Dendritic cell treated with granulocyte-macrophage colony-stimulating factor and Interleukin-4, amounts not matched to agents 40 ng/mL and 50 ng/mL, for 4 days (primary cell): ENCODE measurements at regions of chr15 and their contacts with region 1.

Region 1: DNA sequence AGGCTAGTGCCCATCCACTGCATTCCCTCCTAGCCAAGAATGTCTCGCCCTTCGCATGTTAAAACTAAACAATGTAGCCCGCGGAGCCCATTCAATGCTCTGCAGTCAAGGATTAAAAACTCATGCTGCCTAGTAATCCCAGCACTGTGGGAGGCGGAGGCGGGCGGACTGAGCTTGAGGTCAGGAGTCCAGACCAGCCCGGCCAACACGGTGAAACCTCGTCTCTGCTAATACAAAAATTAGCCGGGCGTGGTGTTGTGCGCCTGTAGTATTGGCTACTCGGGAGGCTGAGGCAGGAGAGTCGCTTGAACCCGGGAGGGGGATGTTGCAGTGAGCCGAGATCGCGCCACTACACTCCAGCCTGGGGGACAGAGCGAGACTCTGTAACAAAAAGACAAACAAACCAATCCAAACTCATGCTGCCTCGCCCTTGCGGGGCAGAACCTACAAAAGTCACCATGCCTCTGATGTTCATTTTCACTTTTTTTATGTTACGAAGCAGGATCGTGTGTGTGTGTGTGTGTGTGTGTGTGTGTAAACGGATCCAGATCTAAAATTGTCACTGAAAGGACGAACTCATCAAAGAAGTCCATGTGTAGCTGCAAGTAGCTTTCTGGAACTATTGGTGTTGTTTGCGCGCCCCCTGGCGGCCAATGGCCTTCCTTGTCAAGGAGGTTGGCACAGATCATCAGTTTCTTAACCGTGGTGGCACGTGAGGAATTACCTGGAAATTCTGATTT is 54.8 kb upstream of the SPESP1 start:
- H3K4me3 Mint-ChIP-seq: peak overlapping the region; percentile 23
- H3K27ac Mint-ChIP-seq: no peak overlapping the region
- H3K4me1 Mint-ChIP-seq: no peaks in the 10 kb centered on the region
- H3K27me3 Mint-ChIP-seq: peaks cover 17% of the 10 kb centered on the region

Region 2: GRCh38 chr15:67542420-67543347 is 1332.9 kb before region 1 on chr15 and contains the start of gene MAP2K5:
- intact Hi-C with region 1: no loop called
- H3K4me3 Mint-ChIP-seq: peak within 1 kb of the TSS; percentile 93
- H3K27ac Mint-ChIP-seq: peak within 1 kb of the TSS; percentile 93
- H3K4me1 Mint-ChIP-seq: peaks cover 25% of the 10 kb centered on the region
- H3K27me3 Mint-ChIP-seq: peaks cover 2% of the 10 kb centered on the region

Region 3: GRCh38 chr15:68553994-68554720 is 321.4 kb before region 1 on chr15:
- intact Hi-C with region 1: loop called (anchors 1 kb)
- H3K4me3 Mint-ChIP-seq: no peak overlapping the region
- H3K27ac Mint-ChIP-seq: no peak overlapping the region
- H3K4me1 Mint-ChIP-seq: peaks cover 8% of the 10 kb centered on the region
- H3K27me3 Mint-ChIP-seq: peaks cover 41% of the 10 kb centered on the region

Region 4: GRCh38 chr15:68559345-68560310 is 315.9 kb before region 1 on chr15:
- intact Hi-C with region 1: loop called (anchors 1 kb)
- H3K4me3 Mint-ChIP-seq: peak overlapping the region; percentile 76
- H3K27ac Mint-ChIP-seq: peak overlapping the region; percentile 13
- H3K4me1 Mint-ChIP-seq: peaks cover 17% of the 10 kb centered on the region
- H3K27me3 Mint-ChIP-seq: peaks cover 57% of the 10 kb centered on the region

Region 5: DNA sequence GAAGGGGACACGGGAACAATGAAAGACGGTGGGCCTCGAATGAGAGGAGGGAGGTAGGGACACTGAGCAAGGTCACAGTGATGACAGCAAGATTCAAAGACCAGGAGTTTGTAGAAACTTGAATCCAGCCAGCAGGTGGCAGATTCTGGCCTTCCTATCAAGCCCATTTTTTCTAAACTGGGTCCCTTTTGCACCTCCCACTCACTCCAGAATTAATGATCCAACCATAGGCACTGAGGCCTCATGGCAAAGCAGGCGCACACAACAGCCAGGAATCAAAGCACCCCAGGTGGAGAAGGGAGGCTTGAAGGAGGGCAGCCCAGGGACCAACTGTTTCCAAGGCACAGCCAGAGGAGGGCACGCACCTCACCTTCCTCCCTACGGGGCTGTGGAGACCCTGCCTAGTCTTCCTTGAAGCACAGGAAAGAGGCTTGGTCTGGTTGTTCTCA is 145.1 kb before region 1 on chr15:
- intact Hi-C with region 1: loop called (anchors 1 kb)
- H3K4me3 Mint-ChIP-seq: no peak overlapping the region
- H3K27ac Mint-ChIP-seq: no peak overlapping the region
- H3K4me1 Mint-ChIP-seq: peaks cover 23% of the 10 kb centered on the region
- H3K27me3 Mint-ChIP-seq: peaks cover 2% of the 10 kb centered on the region

Region 6: DNA sequence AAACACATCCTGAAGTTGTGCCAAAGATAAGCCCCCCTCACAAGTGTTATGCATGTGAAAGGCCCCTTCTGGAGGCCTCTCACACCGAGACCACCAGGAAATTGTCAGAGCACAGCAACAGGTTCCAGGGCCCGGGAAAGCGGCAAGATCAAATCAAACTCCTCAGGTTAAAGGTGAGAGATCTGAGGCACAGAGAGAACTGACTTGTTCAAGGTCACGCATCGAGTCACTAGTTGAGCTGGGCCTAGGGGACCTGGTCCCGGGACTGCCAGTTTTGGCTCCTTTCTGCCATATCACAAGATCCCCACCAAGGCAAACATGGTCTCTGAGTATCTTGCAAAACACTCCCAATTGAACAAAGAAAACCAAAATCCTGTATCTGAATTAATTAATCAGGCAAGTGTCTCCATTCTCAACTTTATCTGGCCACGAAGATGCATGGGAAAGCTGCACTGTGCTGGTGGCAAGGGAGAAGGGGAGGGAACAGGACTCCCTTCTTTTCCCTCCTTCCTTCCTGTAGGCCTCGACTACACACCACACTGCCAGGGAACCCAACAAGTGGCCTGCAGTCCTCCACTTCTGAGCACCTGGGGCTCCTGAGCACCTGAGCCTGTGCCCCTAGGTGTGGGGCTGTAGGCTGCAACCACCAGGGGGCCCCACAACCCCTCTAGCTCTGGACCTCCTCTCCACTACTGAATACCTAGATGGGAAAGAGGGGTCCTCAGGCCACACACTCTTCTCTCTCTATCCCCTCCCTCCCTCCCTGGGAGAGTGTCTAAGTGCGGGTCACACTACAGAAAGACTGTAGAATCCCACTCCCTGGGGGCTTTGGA is 92.1 kb before region 1 on chr15:
- intact Hi-C with region 1: loop called (anchors 5 kb)
- H3K4me3 Mint-ChIP-seq: no peak overlapping the region
- H3K27ac Mint-ChIP-seq: peak overlapping the region; percentile 28
- H3K4me1 Mint-ChIP-seq: peaks cover 53% of the 10 kb centered on the region
- H3K27me3 Mint-ChIP-seq: no peaks in the 10 kb centered on the region

Region 7: GRCh38 chr15:70281811-70282307 is 1406.3 kb after region 1 on chr15:
- intact Hi-C with region 1: no loop called
- H3K4me3 Mint-ChIP-seq: no peak overlapping the region
- H3K27ac Mint-ChIP-seq: peak overlapping the region; percentile 40
- H3K4me1 Mint-ChIP-seq: peaks cover 21% of the 10 kb centered on the region
- H3K27me3 Mint-ChIP-seq: peaks cover 46% of the 10 kb centered on the region